Ovary (tissue), 10 donors: ENCODE measurements at regions of chr7 and their contacts with region 1.

Region 1: DNA sequence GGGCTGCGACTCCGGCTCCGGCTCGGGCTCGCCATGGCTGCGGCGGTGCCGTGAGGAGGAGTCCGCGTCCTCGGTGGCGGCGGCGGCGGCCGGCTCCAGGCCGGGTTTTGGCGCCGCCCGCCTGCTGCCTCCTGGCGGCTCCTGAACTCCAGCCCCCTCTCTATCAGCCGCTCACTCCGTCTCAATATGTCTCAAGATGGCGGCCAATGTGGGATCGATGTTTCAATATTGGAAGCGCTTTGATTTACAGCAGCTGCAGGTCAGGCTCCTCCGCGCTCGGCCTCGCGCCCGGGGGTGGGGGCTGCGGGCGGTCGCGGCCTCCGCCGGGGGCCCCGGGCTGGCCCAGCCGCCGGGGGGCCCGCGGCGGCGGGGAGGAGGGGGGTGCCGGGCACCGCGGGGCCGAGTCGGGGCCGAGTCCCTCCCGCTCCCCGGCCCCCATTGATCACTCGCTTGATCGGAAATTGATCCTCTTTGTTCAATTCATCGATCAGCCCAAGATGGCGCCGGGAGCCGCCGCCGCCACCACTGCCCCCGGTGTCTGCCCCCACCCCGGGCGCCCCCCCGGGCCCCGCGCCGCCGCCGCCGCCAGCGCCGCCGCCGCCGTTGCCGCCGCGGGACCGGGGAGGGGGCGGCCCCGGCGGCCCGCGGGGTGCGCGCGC is 1.5 kb upstream of the CUX1 start:
- DNase-seq: peak; percentile 68 to 82 (median 73)
- H3K4me3 ChIP-seq: peak overlapping the region; percentile 47
- H3K27ac ChIP-seq: peak overlapping the region; percentile 72 to 76
- H3K4me1 ChIP-seq: peaks cover 3% of the 10 kb centered on the region
- H3K27me3 ChIP-seq: no peaks in the 10 kb centered on the region
- CTCF ChIP-seq: no peak
- EP300 ChIP-seq: no peak
- POLR2A ChIP-seq: peak; percentile 26

Region 2: DNA sequence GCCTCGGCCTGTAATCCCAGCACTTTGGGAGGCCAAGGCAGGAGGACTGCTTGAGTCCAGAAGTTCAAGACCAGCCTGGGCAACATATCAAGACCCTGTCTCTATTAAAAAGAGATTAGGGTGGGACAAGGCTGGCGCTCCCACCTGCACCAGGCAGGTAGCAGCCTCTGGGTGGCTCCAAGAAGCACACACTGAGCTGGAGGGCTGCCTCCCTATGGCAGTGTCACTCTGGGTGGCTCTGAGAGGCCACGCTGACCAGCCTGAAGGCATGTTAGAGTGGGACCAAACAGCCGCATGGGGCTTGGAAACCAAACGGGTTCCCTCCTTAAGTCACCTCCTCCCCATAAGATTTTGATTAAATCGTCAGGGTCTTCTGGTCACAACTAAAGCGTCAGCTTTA is 473.1 kb before region 1 on chr7:
- intact Hi-C with region 1: no loop called
- DNase-seq: no peak
- H3K4me3 ChIP-seq: no peak overlapping the region
- H3K27ac ChIP-seq: no peak overlapping the region
- H3K4me1 ChIP-seq: no peaks in the 10 kb centered on the region
- H3K27me3 ChIP-seq: no peaks in the 10 kb centered on the region
- CTCF ChIP-seq: no peak
- EP300 ChIP-seq: no peak
- POLR2A ChIP-seq: no peak

Region 3: DNA sequence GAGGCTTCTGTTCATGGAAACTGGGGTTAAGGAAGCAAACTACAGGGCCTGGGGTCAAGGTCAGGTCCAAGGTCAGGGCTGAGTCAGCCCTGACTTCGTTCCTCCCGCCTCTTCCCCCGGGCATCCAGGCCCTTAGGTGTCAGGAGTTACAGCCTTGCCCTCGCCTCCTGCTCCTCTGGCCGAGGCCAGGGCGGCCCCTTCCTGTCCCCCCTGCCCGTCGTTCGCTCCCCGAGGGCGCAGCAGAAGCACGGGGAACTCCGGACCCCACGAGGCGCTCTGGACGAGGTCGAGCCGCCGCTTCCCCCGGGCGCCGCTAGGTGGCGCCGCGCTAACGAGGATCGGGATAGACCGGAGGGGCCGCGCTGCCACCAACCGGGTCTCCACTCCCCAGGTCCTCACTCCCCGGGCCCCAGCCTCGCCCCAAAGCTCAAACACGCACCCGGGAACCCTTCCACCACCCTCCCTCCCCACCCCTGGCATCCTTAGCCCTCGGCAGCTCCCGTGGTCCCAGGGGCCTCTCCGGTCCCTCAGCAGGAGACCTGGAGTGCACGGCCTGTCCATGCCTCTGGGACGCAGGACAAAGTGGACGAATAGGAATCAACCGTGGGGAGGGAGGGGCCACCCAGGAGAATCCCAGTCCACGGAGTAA is 127.7 kb before region 1 on chr7:
- intact Hi-C with region 1: loop called in 3 of 4 experiments (anchors 5 to 10 kb)
- DNase-seq: peak; percentile 72 to 91 (median 86)
- H3K4me3 ChIP-seq: peak overlapping the region; percentile 24
- H3K27ac ChIP-seq: no peak overlapping the region
- H3K4me1 ChIP-seq: peaks cover 6% of the 10 kb centered on the region
- H3K27me3 ChIP-seq: no peaks in the 10 kb centered on the region
- CTCF ChIP-seq: peak; percentile 94 to 96 (median 95)
- EP300 ChIP-seq: no peak
- POLR2A ChIP-seq: no peak

Region 4: GRCh38 chr7:101767544-101767943 is 48.4 kb before region 1 on chr7:
- intact Hi-C with region 1: no loop called
- DNase-seq: no peak
- H3K4me3 ChIP-seq: no peak overlapping the region
- H3K27ac ChIP-seq: no peak overlapping the region
- H3K4me1 ChIP-seq: no peaks in the 10 kb centered on the region
- H3K27me3 ChIP-seq: no peaks in the 10 kb centered on the region
- CTCF ChIP-seq: no peak
- EP300 ChIP-seq: no peak
- POLR2A ChIP-seq: no peak

Region 5: GRCh38 chr7:101870351-101871062 is 54.5 kb after region 1 on chr7:
- intact Hi-C with region 1: loop called in 1 of 4 experiments (anchors 10 kb)
- DNase-seq: no peak
- H3K4me3 ChIP-seq: no peak overlapping the region
- H3K27ac ChIP-seq: no peak overlapping the region
- H3K4me1 ChIP-seq: peaks cover 24% of the 10 kb centered on the region
- H3K27me3 ChIP-seq: no peaks in the 10 kb centered on the region
- CTCF ChIP-seq: no peak
- EP300 ChIP-seq: no peak
- POLR2A ChIP-seq: no peak

Region 6: GRCh38 chr7:101941481-101942383 is 125.8 kb after region 1 on chr7:
- intact Hi-C with region 1: loop called in 1 of 4 experiments (anchors 10 kb)
- DNase-seq: peak in 3 of 5 donors; percentile 54 to 72 (median 62)
- H3K4me3 ChIP-seq: no peak overlapping the region
- H3K27ac ChIP-seq: peak overlapping the region; percentile 14 to 58
- H3K4me1 ChIP-seq: peaks cover 21% of the 10 kb centered on the region
- H3K27me3 ChIP-seq: no peaks in the 10 kb centered on the region
- CTCF ChIP-seq: no peak
- EP300 ChIP-seq: no peak
- POLR2A ChIP-seq: no peak

Region 7: DNA sequence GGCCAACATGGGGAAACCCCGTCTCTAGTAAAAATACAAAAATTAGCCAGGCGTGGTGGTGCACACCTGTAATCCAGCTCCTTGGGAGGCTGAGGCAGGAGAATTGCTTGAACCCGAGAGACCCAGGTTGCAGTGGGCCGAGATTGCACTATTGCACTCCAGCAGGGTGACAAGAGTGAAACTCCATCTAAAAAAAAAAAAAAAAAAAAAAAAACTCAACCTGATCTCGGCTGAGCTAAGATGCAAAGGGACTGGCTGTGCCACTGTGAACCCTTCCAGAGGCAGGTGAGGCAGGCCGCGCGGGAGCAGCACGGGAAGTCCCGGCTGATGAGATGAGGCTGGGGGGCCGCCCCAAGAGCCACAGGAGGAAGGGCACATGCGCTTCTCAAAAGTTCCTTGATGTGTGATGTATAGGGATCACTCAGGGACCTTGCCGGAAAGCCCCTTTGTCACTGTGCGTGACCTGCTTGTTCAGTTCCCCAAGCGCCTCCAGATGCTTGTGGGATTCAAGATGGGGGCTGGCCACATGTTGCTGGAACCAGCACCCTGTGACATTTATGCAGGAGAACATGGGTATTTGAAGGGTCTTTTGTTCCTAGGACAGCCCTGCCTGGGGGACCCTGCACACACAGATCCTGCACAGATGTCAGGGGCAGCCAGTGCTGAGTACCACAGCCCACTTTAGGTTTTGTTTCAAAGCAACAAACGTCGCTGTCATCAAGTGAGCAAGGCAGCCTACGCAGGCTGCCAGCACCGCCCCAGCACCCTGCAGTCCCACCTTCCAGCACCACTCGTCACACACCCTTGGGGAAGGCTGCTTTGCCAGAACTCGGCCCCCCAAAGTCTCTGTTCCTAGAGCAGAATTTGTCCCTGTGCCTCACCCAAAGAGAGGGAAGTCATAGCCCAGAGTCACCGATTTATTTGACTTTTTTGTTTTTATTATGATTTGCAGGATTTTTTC is 395.9 kb after region 1 on chr7:
- intact Hi-C with region 1: loop called in 1 of 4 experiments (anchors 10 kb)
- DNase-seq: no peak
- H3K4me3 ChIP-seq: no peak overlapping the region
- H3K27ac ChIP-seq: no peak overlapping the region
- H3K4me1 ChIP-seq: no peaks in the 10 kb centered on the region
- H3K27me3 ChIP-seq: no peaks in the 10 kb centered on the region
- CTCF ChIP-seq: no peak
- EP300 ChIP-seq: no peak
- POLR2A ChIP-seq: no peak